Endothelial cell of umbilical vein (primary cell): ENCODE measurements at regions of chr7 and their contacts with region 1.

Region 1: GRCh38 chr7:91264046-91264923 is at the start of gene FZD1:
- DNase-seq: peak; percentile 98
- H3K4me3 ChIP-seq: peak within 1 kb of the TSS; percentile 50 to 85 (median 71)
- H3K27ac ChIP-seq: peak within 1 kb of the TSS; percentile 65
- H3K4me1 ChIP-seq: peaks cover 6% of the 10 kb centered on the region
- H3K27me3 ChIP-seq: peaks cover 1 to 5% of the 10 kb centered on the region in 2 experiments
- CTCF ChIP-seq: peak in 1 of 2 donors; percentile 35
- POLR2A ChIP-seq: no peak
- total RNA-seq, gene FZD1: 3.2 and 3.4 TPM in 2 replicates

Region 2: DNA sequence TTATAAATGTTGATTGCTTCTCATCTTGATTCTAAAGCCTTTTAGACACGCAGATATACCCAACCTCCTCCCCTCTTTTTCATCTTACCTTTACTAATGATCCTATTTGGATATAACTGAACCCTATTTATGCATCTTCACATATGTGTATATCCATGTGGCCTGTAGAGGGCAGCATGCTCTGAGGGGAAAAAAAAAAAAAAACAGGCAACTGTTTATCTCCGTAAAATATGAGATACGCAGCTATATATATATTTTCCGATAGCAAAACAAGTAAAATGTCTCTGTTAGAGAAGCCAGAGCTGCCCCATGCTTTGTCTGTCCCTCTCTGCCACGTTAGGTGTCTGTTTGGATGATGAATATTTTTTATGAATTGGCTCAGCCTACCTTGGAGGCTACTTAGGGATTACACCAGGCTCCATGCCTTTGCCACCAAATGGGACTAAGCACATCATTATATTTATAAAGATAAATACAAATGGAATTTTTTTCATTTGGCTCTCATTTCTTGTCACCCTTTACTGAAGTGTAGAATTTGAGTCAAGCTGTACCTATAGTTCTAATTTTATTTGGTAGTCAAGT is 174.8 kb before region 1 on chr7:
- CTCF ChIA-PET with region 1: interaction called, 4 read pairs
- POLR2A ChIA-PET with region 1: no interaction called
- dilution Hi-C with region 1: no loop called
- intact Hi-C with region 1: loop called (anchors 1 kb)
- DNase-seq: peak; percentile 60
- H3K4me3 ChIP-seq: peak overlapping the region in 1 of 3 experiments; percentile 7
- H3K27ac ChIP-seq: no peak overlapping the region
- H3K4me1 ChIP-seq: peaks cover 2% of the 10 kb centered on the region
- H3K27me3 ChIP-seq: no peaks in the 10 kb centered on the region
- CTCF ChIP-seq: peak; percentile 54 to 57
- POLR2A ChIP-seq: no peak

Region 3: DNA sequence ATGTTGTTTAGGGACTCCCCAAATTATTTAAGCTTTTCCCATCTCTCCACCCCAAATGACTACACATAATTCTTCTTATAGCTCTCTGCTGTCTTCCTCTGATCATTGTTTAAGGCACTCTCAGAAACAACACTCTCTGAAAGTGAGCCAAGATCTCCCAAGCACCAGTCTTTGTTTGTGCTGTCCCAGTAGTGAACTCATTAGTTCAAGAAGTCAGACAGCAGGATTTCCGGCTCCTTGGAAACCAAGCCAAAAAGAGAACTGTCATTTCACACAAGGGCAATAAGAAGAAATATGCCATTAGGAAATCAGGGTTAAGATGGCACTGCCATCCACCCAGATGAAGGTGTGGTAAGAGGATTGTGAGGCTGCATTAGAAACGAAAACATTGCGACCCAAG is 83.0 kb after region 1 on chr7:
- CTCF ChIA-PET with region 1: no interaction called
- POLR2A ChIA-PET with region 1: no interaction called
- dilution Hi-C with region 1: no loop called
- intact Hi-C with region 1: loop called (anchors 1 kb)
- DNase-seq: peak; percentile 93
- H3K4me3 ChIP-seq: no peak overlapping the region
- H3K27ac ChIP-seq: peak overlapping the region; percentile 73
- H3K4me1 ChIP-seq: peaks cover 55% of the 10 kb centered on the region
- H3K27me3 ChIP-seq: no peaks in the 10 kb centered on the region
- CTCF ChIP-seq: no peak
- POLR2A ChIP-seq: no peak

Region 4: DNA sequence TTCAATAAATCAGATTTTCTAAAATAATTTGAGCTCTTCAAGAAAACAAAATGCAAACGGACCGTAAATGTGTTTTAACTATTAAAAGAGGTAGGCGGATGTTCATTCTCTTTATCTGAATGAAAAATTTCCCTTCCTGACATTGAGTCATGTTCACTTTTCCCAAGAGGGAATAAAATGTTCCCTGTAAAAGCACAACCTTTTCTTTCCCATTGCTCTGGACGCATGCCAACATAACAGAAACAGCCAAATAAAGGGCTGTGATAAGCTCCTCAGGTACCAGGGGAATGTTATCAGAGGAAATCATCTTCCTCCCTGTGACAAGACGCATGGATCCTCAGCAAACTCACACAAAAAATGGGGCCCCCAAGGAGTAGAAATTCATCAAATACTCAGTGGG is 364.5 kb after region 1 on chr7:
- CTCF ChIA-PET with region 1: interaction called, 3 read pairs
- POLR2A ChIA-PET with region 1: no interaction called
- dilution Hi-C with region 1: no loop called
- intact Hi-C with region 1: loop called (anchors 2 kb)
- DNase-seq: peak; percentile 77
- H3K4me3 ChIP-seq: no peak overlapping the region
- H3K27ac ChIP-seq: peak overlapping the region; percentile 41
- H3K4me1 ChIP-seq: peaks cover 22% of the 10 kb centered on the region
- H3K27me3 ChIP-seq: no peaks in the 10 kb centered on the region
- CTCF ChIP-seq: no peak
- POLR2A ChIP-seq: no peak

Region 5: GRCh38 chr7:91784463-91784862 is 520.2 kb after region 1 on chr7:
- CTCF ChIA-PET with region 1: no interaction called
- POLR2A ChIA-PET with region 1: no interaction called
- dilution Hi-C with region 1: no loop called
- intact Hi-C with region 1: loop called (anchors 10 kb)
- DNase-seq: peak; percentile 37
- H3K4me3 ChIP-seq: no peak overlapping the region
- H3K27ac ChIP-seq: no peak overlapping the region
- H3K4me1 ChIP-seq: no peaks in the 10 kb centered on the region
- H3K27me3 ChIP-seq: peaks cover 3 to 8% of the 10 kb centered on the region in 2 experiments
- CTCF ChIP-seq: peak in 1 of 2 donors; percentile 9
- POLR2A ChIP-seq: no peak